ENCODE measurements at regions of chr17 and their contacts with region 1.

Region 1: GRCh38 chr17:48625495-48626244 is 488 bp downstream of the HOXB9 start:
- DNase-seq: no peak
- H3K4me3 ChIP-seq: peak overlapping the region; percentile 33
- H3K27ac ChIP-seq: no peak overlapping the region
- H3K4me1 ChIP-seq: peaks cover 2% of the 10 kb centered on the region
- H3K27me3 ChIP-seq: peaks cover 8% of the 10 kb centered on the region
- CTCF ChIP-seq: no peak
- EP300 ChIP-seq: no peak
- POLR2A ChIP-seq: no peak

Region 2: DNA sequence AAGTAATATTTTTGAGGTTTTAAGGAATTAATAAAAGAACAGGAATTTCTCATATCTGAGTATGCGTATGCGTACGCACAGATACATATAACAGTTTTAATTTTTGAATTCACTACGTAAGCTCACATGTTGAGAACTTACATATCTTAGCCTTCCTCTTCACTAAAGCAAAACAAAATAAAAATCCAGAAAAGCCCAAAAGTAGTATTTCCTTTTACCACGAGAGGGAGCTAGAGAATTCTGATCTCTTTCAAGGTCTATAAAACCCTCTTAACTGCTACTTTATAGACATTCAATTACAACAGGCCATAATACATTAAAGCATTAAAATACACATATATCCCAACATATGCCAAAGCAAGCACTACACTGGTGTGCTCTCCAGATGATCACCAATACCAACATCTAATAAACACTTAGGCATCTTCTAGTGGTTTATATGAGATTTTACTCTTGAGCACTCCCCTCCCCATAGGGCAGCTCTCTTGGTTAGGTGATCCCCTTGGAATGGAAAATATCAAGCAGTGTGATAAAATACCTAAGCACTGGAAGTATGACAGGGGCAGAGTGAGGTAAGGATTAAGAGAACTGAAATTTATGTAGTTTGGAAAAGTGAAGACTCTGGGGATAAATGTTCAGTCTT is 289.7 kb before region 1 on chr17:
- intact Hi-C with region 1: loop called in 1 of 4 experiments (anchors 10 kb)
- DNase-seq: no peak
- H3K4me3 ChIP-seq: no peak overlapping the region
- H3K27ac ChIP-seq: no peak overlapping the region
- H3K4me1 ChIP-seq: no peaks in the 10 kb centered on the region
- H3K27me3 ChIP-seq: no peaks in the 10 kb centered on the region
- CTCF ChIP-seq: no peak
- EP300 ChIP-seq: no peak
- POLR2A ChIP-seq: no peak

Region 3: GRCh38 chr17:48869821-48870318 is 244.2 kb after region 1 on chr17:
- intact Hi-C with region 1: no loop called
- DNase-seq: no peak
- H3K4me3 ChIP-seq: no peak overlapping the region
- H3K27ac ChIP-seq: no peak overlapping the region
- H3K4me1 ChIP-seq: peaks cover 16% of the 10 kb centered on the region
- H3K27me3 ChIP-seq: no peaks in the 10 kb centered on the region
- CTCF ChIP-seq: no peak
- EP300 ChIP-seq: no peak
- POLR2A ChIP-seq: no peak

Measured in ovary (tissue), 10 donors.